CD8-positive, alpha-beta T cell (primary cell): ENCODE measurements at regions of chr2 and their contacts with region 1.

Region 1: DNA sequence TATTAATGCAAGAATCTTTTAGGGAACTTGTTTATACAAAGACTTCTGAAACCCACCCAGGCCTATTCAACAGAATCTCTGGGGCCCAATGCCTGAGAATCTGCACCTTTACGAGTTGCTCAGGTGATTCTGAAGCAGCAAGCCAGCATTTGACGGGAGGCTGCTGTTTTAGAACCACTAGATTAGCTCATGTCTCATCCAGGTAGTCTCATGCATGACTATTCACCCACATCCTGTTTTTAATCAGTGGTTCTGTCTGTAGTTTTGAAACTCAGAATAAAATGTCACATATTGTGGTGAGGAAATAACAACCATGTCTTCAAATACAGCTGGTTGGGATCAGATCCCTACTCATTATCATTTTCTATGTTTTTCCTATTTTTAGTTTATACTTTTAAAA is 39.5 kb downstream of the CYTIP start:
- DNase-seq: peak; percentile 56 to 92 (median 72)
- ATAC-seq: peak; percentile 92
- H3K4me3 ChIP-seq: no peak overlapping the region
- H3K4me3 Mint-ChIP-seq: peak overlapping the region; percentile 44
- H3K27ac ChIP-seq: peak overlapping the region; percentile 65 to 69
- H3K27ac Mint-ChIP-seq: peak overlapping the region; percentile 99
- H3K4me1 ChIP-seq: peaks cover 55% of the 10 kb centered on the region
- H3K4me1 Mint-ChIP-seq: peaks cover 69% of the 10 kb centered on the region
- H3K27me3 ChIP-seq: no peaks in the 10 kb centered on the region
- H3K27me3 Mint-ChIP-seq: no peaks in the 10 kb centered on the region
- CTCF ChIP-seq: no peak

Region 2: DNA sequence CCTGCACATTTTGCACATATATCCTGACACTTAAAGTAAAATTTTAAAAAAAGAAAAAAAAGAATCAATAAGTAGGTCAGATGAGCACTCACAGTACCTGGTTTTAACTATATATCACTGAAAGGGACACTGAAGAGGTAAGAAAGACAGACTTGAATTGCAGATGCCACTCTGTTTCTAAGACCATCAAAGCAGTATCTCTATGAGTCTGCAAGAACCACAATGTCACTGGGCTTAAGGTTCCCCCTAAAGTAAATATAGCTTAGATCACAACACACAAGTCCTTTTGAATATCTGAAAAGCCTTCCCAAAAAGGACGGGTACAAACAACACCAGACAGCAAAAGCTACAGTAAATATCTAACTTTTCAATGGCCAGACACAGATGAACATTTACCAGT is 18.1 kb before region 1 on chr2:
- CTCF ChIA-PET with region 1: interaction called, 6 read pairs
- POLR2A ChIA-PET with region 1: interaction called, 4 read pairs
- intact Hi-C with region 1: loop called (anchors 2 kb)
- DNase-seq: no peak
- ATAC-seq: no peak
- H3K4me3 ChIP-seq: no peak overlapping the region
- H3K4me3 Mint-ChIP-seq: no peak overlapping the region
- H3K27ac ChIP-seq: peak overlapping the region in 1 of 2 experiments; percentile 21
- H3K27ac Mint-ChIP-seq: peak overlapping the region; percentile 71
- H3K4me1 ChIP-seq: peaks cover 17% of the 10 kb centered on the region
- H3K4me1 Mint-ChIP-seq: peaks cover 62% of the 10 kb centered on the region
- H3K27me3 ChIP-seq: no peaks in the 10 kb centered on the region
- H3K27me3 Mint-ChIP-seq: no peaks in the 10 kb centered on the region
- CTCF ChIP-seq: no peak

Region 3: DNA sequence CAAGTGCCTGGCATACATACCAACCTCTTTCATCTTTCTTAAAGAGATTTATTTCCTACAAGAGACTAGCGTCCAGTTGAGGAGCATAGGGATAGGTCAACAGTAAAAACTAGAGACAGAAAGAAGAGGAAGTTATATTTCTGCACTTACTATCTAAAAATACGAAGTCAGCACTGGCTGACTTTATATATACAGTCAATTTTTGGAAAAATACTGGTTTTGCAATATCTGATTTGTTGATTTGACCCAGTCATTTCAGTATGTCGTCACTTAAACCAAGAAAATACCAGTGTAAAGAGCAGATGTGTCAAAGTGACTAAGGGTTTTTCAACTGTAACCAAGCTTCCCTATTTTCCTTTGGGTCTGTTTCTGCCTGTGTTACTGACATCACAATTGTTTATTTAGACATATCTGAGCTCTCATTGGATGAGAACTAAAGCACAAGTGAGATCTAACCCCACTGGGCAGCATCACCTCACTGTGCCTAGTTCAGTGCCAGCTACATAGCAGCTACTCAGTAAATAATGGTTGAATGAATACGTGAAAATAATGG is 16.5 kb after region 1 on chr2:
- CTCF ChIA-PET with region 1: interaction called, 6 read pairs
- POLR2A ChIA-PET with region 1: interaction called, 48 read pairs
- intact Hi-C with region 1: loop called in 1 of 2 experiments (anchors 2 kb)
- DNase-seq: peak in 2 of 9 experiments; percentile 52 to 72
- ATAC-seq: peak; percentile 19
- H3K4me3 ChIP-seq: no peak overlapping the region
- H3K4me3 Mint-ChIP-seq: peak overlapping the region; percentile 47
- H3K27ac ChIP-seq: peak overlapping the region; percentile 2 to 84
- H3K27ac Mint-ChIP-seq: peak overlapping the region; percentile 94
- H3K4me1 ChIP-seq: peaks cover 66% of the 10 kb centered on the region
- H3K4me1 Mint-ChIP-seq: peaks cover 73% of the 10 kb centered on the region
- H3K27me3 ChIP-seq: no peaks in the 10 kb centered on the region
- H3K27me3 Mint-ChIP-seq: no peaks in the 10 kb centered on the region
- CTCF ChIP-seq: no peak

Region 4: GRCh38 chr2:157433394-157433793 is 29.0 kb after region 1 on chr2:
- CTCF ChIA-PET with region 1: interaction called, 5 read pairs
- POLR2A ChIA-PET with region 1: interaction called, 83 read pairs
- intact Hi-C with region 1: no loop called
- DNase-seq: no peak
- ATAC-seq: peak; percentile 10
- H3K4me3 ChIP-seq: peak overlapping the region; percentile 57 to 83
- H3K4me3 Mint-ChIP-seq: peak overlapping the region; percentile 80
- H3K27ac ChIP-seq: peak overlapping the region; percentile 44 to 92
- H3K27ac Mint-ChIP-seq: peak overlapping the region; percentile 91
- H3K4me1 ChIP-seq: peaks cover 65% of the 10 kb centered on the region
- H3K4me1 Mint-ChIP-seq: peaks cover 85% of the 10 kb centered on the region
- H3K27me3 ChIP-seq: no peaks in the 10 kb centered on the region
- H3K27me3 Mint-ChIP-seq: no peaks in the 10 kb centered on the region
- CTCF ChIP-seq: no peak

Region 5: GRCh38 chr2:157468931-157469708 is 64.8 kb after region 1 on chr2:
- CTCF ChIA-PET with region 1: no interaction called
- POLR2A ChIA-PET with region 1: interaction called, 5 read pairs
- intact Hi-C with region 1: loop called (anchors 5 kb)
- DNase-seq: peak in 2 of 9 experiments; percentile 70 to 85
- ATAC-seq: peak; percentile 87
- H3K4me3 ChIP-seq: peak overlapping the region in 1 of 2 experiments; percentile 2
- H3K4me3 Mint-ChIP-seq: peak overlapping the region; percentile 57
- H3K27ac ChIP-seq: peak overlapping the region; percentile 67 to 73
- H3K27ac Mint-ChIP-seq: peak overlapping the region; percentile 96
- H3K4me1 ChIP-seq: peaks cover 43% of the 10 kb centered on the region
- H3K4me1 Mint-ChIP-seq: peaks cover 67% of the 10 kb centered on the region
- H3K27me3 ChIP-seq: no peaks in the 10 kb centered on the region
- H3K27me3 Mint-ChIP-seq: no peaks in the 10 kb centered on the region
- CTCF ChIP-seq: no peak